Heart left ventricle (tissue), 16 donors: ENCODE measurements at regions of chr17 and their contacts with region 1.

Region 1: GRCh38 chr17:54968262-54968987 is at the starts of genes COX11 and STXBP4:
- DNase-seq: peak; percentile 95 to 96 (median 95)
- ATAC-seq: peak; percentile 99
- H3K4me3 ChIP-seq: peak within 1 kb of the TSS; percentile 72 to 97 (median 89)
- H3K27ac ChIP-seq: peak within 1 kb of the TSS; percentile 63 to 92 (median 86)
- H3K4me1 ChIP-seq: peaks cover 0 to 30% (median 17%) of the 10 kb centered on the region in 12 donors
- H3K27me3 ChIP-seq: no peaks in the 10 kb centered on the region
- CTCF ChIP-seq: peak in 11 of 12 donors; percentile 2 to 61 (median 33)
- POLR2A ChIP-seq: peak in 1 of 2 donors; percentile 90
- total RNA-seq, gene COX11: 42.5 to 73.1 (median 55.6) TPM
- total RNA-seq, gene STXBP4: 2.2 to 7.8 (median 4.8) TPM

Region 2: GRCh38 chr17:54900457-54901229 is 67.8 kb before region 1 on chr17 and contains the start of gene TOM1L1:
- intact Hi-C with region 1: loop called in 1 of 10 experiments (anchors 10 kb)
- DNase-seq: peak; percentile 45 to 84 (median 72)
- ATAC-seq: peak; percentile 67 to 97 (median 93)
- H3K4me3 ChIP-seq: peak within 1 kb of the TSS; percentile 47 to 72 (median 60)
- H3K27ac ChIP-seq: peak within 1 kb of the TSS in 5 of 12 donors; percentile 18 to 55 (median 37)
- H3K4me1 ChIP-seq: peaks cover 0 to 19% (median 7%) of the 10 kb centered on the region in 12 donors
- H3K27me3 ChIP-seq: peaks cover 0 to 20% (median 0%) of the 10 kb centered on the region in 9 donors
- CTCF ChIP-seq: peak in 2 of 12 donors; percentile 7 to 14
- POLR2A ChIP-seq: no peak
- total RNA-seq, gene TOM1L1: 7.2 to 19.7 (median 9.9) TPM

Region 3: GRCh38 chr17:54924405-54924804 is 44.0 kb before region 1 on chr17:
- intact Hi-C with region 1: no loop called
- DNase-seq: no peak
- ATAC-seq: no peak
- H3K4me3 ChIP-seq: no peak overlapping the region
- H3K27ac ChIP-seq: no peak overlapping the region
- H3K4me1 ChIP-seq: no peaks in the 10 kb centered on the region
- H3K27me3 ChIP-seq: no peaks in the 10 kb centered on the region
- CTCF ChIP-seq: no peak
- POLR2A ChIP-seq: no peak

Region 4: DNA sequence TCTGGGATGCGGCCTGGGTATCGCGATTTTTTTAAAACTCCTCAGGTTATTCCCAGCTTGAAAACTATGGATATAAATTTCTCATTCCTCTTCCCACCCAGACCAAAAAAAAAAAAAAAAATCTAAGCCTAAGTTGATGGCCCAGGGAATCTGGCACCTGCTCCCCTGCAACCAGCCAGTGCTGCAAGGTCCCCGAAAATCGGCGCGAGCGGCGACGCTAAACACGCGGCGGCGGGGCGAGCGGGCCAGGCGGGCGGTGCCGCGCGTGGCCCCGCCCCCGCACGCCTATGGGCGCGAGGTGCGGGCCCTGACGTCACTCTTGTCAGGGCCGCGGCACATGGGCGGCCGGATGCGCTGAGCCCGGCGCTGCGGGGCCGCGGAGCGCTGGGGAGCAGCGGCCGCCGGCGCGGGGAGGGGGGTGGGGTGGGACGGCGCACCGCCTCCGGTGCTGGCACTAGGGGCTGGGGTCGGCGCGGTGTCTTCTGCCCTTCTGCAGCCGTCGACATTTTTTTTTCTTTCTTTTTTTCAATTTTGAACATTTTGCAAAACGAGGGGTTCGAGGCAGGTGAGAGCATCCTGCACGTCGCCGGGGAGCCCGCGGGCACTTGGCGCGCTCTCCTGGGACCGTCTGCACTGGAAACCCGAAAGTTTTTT is 296.3 kb after region 1 on chr17 and contains the start of gene HLF:
- intact Hi-C with region 1: no loop called
- DNase-seq: peak; percentile 81 to 90 (median 87)
- ATAC-seq: peak; percentile 86 to 98 (median 93)
- H3K4me3 ChIP-seq: peak within 1 kb of the TSS; percentile 50 to 89 (median 68)
- H3K27ac ChIP-seq: peak within 1 kb of the TSS; percentile 36 to 94 (median 82)
- H3K4me1 ChIP-seq: peaks cover 0 to 52% (median 34%) of the 10 kb centered on the region in 12 donors
- H3K27me3 ChIP-seq: peaks cover 0 to 60% (median 0%) of the 10 kb centered on the region in 9 donors
- CTCF ChIP-seq: no peak
- POLR2A ChIP-seq: peak in 1 of 2 donors; percentile 55
- total RNA-seq, gene HLF: 7.5 to 46.3 (median 28.7) TPM